ENCODE measurements at regions of chr16 and their contacts with region 1.

Region 1: DNA sequence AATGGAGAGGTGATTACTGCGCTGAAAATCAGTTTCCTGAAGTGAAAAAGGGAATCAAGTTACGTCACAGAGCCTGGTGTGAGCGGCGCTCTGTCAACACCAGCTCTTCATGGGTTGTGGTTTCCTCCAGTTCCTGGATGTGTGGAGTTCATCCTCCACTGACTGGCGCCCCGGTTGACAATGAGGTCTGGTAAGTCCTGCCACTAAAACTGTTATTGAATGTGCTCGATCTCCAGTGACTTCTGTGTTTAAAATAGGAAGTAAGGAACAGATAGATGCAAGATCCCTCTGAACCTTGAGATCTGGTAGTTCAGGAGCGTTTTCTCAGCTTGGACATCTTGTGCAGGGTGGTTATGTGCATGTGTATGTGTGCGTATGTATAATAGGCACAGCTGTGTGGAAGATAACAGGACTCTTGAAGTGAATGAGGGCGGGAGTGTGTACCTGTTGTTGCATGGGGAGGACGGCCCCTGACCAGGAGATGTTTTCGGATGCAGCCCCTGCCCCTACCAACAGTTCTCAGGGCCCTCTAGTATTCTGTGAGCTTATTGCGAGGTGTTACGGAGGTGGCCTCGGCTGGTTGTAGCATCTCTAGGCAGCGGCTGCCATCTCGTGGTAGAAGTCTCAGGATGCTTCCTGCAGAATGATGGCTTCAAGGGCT is 22.0 kb upstream of the GOT2 start:
- DNase-seq: peak; percentile 80
- ATAC-seq: peak; percentile 96
- H3K4me3 Mint-ChIP-seq: peak overlapping the region; percentile 39
- H3K27ac Mint-ChIP-seq: peak overlapping the region; percentile 17
- H3K4me1 Mint-ChIP-seq: peaks cover 10% of the 10 kb centered on the region
- H3K27me3 Mint-ChIP-seq: no peaks in the 10 kb centered on the region
- CTCF ChIP-seq: 0 out of 2 replicates have a peak, but pooled peaks have one; percentile 37

Region 2: DNA sequence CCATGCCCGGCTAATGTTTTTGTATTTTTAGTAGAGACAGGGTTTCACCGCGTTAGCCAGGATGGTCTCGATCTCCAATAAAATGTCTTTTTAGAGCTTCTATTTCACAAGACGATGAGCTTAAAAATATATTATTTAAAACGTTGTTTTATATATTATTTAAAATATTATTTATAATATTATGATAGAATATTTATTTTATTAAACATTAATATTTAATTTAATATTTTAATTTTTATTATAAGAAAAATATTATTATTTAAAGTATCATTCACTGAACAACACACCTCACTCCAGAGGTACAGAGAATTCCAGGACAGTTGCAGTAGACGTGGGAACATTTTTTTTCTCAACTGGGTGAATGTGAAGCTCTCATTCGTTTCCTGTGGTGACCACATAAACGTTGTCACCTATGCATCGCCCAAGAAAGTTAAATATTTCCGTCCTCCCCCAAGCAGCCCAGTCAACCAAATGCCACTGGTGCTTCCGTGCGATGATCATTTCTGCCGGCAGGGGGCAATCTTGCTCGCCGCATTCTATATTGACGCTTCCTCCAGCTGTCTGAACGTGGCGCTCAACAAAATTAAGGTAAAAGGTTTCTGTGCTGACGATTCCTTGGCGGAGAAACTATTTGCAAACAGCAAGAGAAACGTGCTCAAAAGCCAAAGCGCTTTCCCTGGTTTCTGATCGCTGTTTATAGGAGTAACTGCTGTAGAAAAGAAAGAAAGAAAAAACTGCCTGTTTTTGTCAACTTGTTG is 419.6 kb before region 1 on chr16:
- CTCF ChIA-PET with region 1: interaction called, 13 read pairs
- POLR2A ChIA-PET with region 1: no interaction called
- DNase-seq: peak; percentile 94
- ATAC-seq: peak; percentile 75
- H3K4me3 Mint-ChIP-seq: peak overlapping the region; percentile 31
- H3K27ac Mint-ChIP-seq: peak overlapping the region; percentile 83
- H3K4me1 Mint-ChIP-seq: peaks cover 30% of the 10 kb centered on the region
- H3K27me3 Mint-ChIP-seq: no peaks in the 10 kb centered on the region
- CTCF ChIP-seq: peak; percentile 73

Region 3: GRCh38 chr16:58494981-58495520 is 261.1 kb before region 1 on chr16:
- CTCF ChIA-PET with region 1: interaction called, 21 read pairs
- POLR2A ChIA-PET with region 1: no interaction called
- DNase-seq: peak; percentile 83
- ATAC-seq: peak; percentile 60
- H3K4me3 Mint-ChIP-seq: 0 out of 2 replicates have a peak overlapping the region, but pooled peaks have one; percentile 22
- H3K27ac Mint-ChIP-seq: 0 out of 2 replicates have a peak overlapping the region, but pooled peaks have one; percentile 72
- H3K4me1 Mint-ChIP-seq: peaks cover 16% of the 10 kb centered on the region
- H3K27me3 Mint-ChIP-seq: peaks cover 37% of the 10 kb centered on the region
- CTCF ChIP-seq: no peak; the same call in 1 of the 2 replicates

Region 4: DNA sequence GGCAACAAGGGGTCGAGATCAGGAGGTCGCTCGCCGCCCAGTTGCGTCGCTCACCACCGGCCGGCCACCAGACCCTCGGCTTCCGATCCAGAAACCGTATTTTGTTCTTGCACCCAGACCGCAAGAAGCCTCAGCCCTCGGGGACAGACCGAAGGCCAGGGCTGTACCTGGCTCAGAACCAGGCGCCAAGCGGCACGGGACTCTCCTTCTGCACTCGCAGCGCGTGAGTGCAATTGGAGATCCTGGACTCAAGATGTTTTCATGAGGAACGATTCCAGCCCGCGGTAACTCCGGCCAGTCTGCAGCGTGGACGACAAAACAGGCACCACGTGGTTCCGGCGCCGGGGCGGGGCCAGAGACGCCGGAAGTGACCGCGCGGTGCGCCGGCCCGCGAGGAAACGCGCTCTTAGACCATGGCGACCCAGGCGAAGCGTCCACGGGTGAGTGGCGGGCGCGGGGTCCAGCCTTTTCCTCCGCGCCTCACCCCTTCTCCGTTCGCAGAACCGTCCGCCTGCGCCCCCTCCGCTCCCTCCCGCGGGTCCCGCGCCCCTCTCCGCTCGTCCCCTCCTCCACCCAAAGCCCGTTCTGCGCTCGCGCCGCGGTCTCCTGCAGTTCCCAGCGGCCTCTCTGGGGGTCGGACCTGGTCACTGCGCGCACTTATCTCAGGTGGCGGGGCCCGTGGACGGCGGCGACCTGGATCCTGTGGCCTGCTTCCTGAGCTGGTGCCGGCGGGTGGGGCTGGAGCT is 240.8 kb before region 1 on chr16 and contains the start of gene SETD6:
- CTCF ChIA-PET with region 1: interaction called, 22 read pairs
- POLR2A ChIA-PET with region 1: interaction called, 5 read pairs
- DNase-seq: peak; percentile 84
- ATAC-seq: peak; percentile 60
- H3K4me3 Mint-ChIP-seq: peak within 1 kb of the TSS; percentile 88
- H3K27ac Mint-ChIP-seq: peak within 1 kb of the TSS; percentile 87
- H3K4me1 Mint-ChIP-seq: peaks cover 29% of the 10 kb centered on the region
- H3K27me3 Mint-ChIP-seq: no peaks in the 10 kb centered on the region
- CTCF ChIP-seq: no peak
- total RNA-seq, gene SETD6: 34.0 to 41.1 TPM (median 35.0 TPM) in 3 replicates

Region 5: GRCh38 chr16:58678716-58679115 is 77.4 kb before region 1 on chr16:
- CTCF ChIA-PET with region 1: interaction called, 36 read pairs
- POLR2A ChIA-PET with region 1: no interaction called
- DNase-seq: no peak
- ATAC-seq: no peak
- H3K4me3 Mint-ChIP-seq: no peak overlapping the region
- H3K27ac Mint-ChIP-seq: no peak overlapping the region
- H3K4me1 Mint-ChIP-seq: peaks cover 4% of the 10 kb centered on the region
- H3K27me3 Mint-ChIP-seq: no peaks in the 10 kb centered on the region
- CTCF ChIP-seq: no peak

Region 6: DNA sequence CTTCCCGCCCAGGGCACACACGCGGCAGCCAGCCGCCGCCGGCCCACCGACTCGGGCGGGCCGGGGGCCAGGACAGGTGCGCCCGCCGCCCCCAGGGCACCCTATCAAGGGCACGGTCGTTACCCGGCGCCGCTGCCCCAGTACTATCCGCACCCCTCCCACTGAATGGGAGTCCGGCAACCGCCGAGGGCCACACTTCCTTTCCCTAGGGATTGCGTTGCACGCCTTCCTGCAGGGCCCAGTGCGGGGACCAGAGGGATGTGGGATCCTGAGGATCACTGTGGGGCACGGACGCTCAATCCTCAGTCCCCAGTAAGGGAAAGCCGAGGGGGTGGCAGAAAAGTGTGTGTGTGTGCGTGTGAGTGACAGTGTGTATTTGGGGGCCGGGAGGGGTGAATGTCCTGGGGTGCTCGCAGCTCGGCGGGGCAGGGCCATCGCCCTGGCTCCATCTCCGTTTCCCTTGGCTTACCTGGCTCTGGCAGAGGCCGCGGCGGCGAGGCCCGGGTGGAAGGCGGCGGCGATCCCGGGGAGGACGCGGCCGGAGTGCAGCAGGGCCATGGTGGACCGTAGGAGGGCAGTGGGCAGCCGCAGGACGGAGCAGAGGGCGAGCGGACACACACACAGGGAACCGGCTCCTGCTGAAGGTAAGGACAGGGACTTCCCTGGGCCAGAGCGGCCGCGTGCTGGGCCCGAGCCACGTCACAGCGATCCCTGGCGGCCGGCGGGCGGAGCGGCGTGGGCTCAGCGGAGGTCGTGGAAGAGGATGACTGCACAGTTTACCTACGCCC is 22.3 kb before region 1 on chr16 and contains the start of gene GOT2:
- CTCF ChIA-PET with region 1: interaction called, 40 read pairs
- POLR2A ChIA-PET with region 1: no interaction called
- DNase-seq: peak; percentile 83
- ATAC-seq: peak; percentile 95
- H3K4me3 Mint-ChIP-seq: peak within 1 kb of the TSS; percentile 100
- H3K27ac Mint-ChIP-seq: peak within 1 kb of the TSS; percentile 97
- H3K4me1 Mint-ChIP-seq: peaks cover 29% of the 10 kb centered on the region
- H3K27me3 Mint-ChIP-seq: no peaks in the 10 kb centered on the region
- CTCF ChIP-seq: peak; percentile 32; the same call in 1 of the 2 replicates
- total RNA-seq, gene GOT2: 180 to 192 TPM (median 185 TPM) in 3 replicates